IMR-90 (cell line): ENCODE measurements at regions of chr17 and their contacts with region 1.

Region 1: GRCh38 chr17:65231662-65232335 is 94.6 kb downstream of the RGS9 start:
- DNase-seq: peak; percentile 88
- ATAC-seq: peak; percentile 97
- H3K4me3 ChIP-seq: no peak overlapping the region
- H3K27ac ChIP-seq: no peak overlapping the region
- H3K4me1 ChIP-seq: peaks cover 2% of the 10 kb centered on the region; the same call in 1 of the 2 replicates
- H3K27me3 ChIP-seq: peaks cover 2% of the 10 kb centered on the region; the same call in 1 of the 2 replicates
- CTCF ChIP-seq: peak; percentile 89
- POLR2A ChIP-seq: no peak
- RAD21 ChIP-seq: peak; percentile 96

Region 2: DNA sequence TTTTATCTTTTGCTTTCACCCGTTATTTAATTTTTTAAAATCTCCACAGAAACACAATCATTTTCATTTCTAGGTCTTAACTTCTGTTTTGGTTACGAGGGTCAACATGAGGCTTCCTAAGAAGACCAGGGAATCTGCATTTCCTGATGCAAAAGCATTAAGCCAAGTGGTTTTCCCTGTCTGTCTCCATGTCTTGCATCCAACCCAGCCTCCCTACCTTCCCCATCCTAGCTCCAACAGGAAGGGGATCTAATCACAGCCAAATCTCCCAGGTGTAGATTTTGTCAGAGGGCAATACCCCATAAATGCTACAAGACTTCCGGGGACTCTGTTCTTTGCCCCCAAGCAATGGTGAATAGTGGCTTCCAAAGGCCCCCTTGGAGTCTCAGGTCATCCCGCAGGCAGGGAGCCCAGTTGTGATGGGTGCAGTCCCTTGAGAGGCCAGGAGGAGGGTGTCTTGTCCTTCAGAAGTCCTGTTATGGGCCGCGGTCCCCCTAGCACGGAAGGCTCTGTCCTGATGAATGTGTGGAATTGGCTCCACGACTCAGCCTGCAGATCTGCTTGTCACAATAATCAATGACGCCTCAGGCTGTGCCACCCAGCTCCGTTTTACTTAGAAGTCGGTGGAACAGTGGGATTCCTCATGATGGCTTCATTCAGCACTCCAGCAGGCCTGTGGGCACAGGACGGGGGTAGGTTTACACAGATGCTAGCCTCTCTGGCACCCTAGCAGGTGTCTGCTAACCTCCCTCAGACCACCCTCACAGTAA is 46.4 kb after region 1 on chr17:
- CTCF ChIA-PET with region 1: no interaction called
- POLR2A ChIA-PET with region 1: no interaction called
- dilution Hi-C with region 1: no loop called
- in situ Hi-C with region 1: no loop called
- intact Hi-C with region 1: loop called (anchors 1 kb)
- DNase-seq: peak; percentile 62
- ATAC-seq: peak; percentile 97
- H3K4me3 ChIP-seq: no peak overlapping the region
- H3K27ac ChIP-seq: no peak overlapping the region
- H3K4me1 ChIP-seq: peaks cover 3% of the 10 kb centered on the region; the same call in 1 of the 2 replicates
- H3K27me3 ChIP-seq: peaks cover 4% of the 10 kb centered on the region
- CTCF ChIP-seq: peak; percentile 72
- POLR2A ChIP-seq: no peak
- RAD21 ChIP-seq: peak; percentile 84

Region 3: DNA sequence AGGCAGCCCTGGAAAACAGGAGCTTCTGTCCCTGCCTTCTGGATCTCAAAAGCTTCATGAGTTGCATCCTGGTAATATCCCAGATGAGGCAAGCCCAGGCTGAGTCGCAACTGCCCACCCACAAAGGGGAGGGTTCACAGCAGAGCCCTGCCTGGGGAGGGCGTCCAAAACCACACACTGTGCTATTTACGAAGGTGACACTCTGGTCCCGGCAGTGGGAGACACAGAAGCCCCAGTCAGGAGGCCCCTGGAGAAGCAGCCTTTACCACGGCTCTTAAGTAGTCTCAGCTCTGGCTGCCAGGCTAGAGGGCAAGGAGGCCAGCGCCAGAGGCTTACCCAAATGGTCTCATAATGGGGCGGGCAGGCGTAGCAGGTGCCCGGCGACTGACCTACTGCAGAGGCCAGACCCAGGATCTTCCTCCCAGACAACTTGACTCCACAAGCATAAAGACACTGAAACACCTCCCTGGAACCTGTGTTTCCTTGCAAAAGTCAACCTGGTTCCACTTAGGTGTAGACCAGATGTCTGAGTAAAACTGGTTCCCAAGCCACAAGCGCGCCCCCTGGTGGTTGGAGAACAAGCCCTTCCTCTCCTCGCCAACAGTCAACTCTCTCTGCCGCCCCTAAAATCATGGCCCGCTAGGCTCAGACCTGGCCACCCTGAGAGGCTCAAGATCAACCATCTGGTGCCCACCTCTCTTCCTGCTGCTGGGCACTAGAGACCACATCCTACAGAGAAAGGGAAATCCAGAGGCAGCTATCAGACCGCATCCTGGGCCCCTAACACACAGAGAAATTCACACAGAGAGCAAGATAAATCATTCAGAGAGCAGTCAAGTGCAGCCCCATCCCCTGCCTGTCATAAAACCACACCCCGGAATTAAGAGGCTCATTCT is 324.5 kb after region 1 on chr17:
- CTCF ChIA-PET with region 1: no interaction called
- POLR2A ChIA-PET with region 1: no interaction called
- dilution Hi-C with region 1: no loop called
- in situ Hi-C with region 1: no loop called
- intact Hi-C with region 1: loop called (anchors 2 kb)
- DNase-seq: peak; percentile 50
- ATAC-seq: no peak
- H3K4me3 ChIP-seq: no peak overlapping the region
- H3K27ac ChIP-seq: no peak overlapping the region
- H3K4me1 ChIP-seq: peaks cover 17% of the 10 kb centered on the region
- H3K27me3 ChIP-seq: peaks cover 15% of the 10 kb centered on the region
- CTCF ChIP-seq: peak; percentile 62
- POLR2A ChIP-seq: no peak
- RAD21 ChIP-seq: peak; percentile 60

Region 4: DNA sequence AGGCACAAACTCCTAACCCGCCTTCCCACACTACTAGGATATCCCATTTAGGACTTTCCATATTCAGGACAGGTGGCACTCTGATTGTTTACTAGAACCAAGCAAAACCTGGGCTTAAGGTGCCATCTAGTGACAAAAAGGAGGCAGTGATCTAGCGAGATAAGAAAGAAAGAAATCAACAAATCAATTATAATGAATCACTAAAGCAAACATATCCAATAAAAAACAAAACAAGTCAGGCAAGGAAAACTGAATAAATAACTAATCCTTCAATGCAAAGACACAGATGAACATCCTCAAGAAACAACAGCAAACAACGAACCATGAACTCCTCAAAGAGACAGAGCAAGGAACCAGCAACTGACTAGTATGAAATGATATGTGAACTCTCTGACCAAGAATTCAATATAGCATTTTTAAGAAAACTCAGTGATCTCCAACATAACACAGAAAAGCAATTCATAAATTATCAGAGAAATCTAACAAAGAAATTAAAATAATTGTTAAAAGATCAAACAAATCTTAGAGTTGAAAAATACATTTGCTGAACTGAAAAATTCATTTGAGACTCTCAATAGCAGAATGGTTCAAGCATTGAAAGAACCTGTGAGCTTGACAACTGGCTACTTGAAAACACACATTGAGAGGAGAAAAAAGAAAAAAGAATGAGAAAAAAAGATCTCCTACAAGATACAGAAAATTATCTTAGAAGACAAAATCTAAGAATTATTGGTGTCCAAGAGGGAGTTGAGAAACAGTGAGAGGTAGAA is 756.5 kb after region 1 on chr17:
- CTCF ChIA-PET with region 1: no interaction called
- POLR2A ChIA-PET with region 1: no interaction called
- dilution Hi-C with region 1: no loop called
- in situ Hi-C with region 1: no loop called
- intact Hi-C with region 1: loop called (anchors 1 kb)
- DNase-seq: peak; percentile 48
- ATAC-seq: no peak
- H3K4me3 ChIP-seq: no peak overlapping the region
- H3K27ac ChIP-seq: no peak overlapping the region
- H3K4me1 ChIP-seq: no peaks in the 10 kb centered on the region
- H3K27me3 ChIP-seq: no peaks in the 10 kb centered on the region
- CTCF ChIP-seq: peak; percentile 64
- POLR2A ChIP-seq: no peak
- RAD21 ChIP-seq: peak; percentile 85

Region 5: GRCh38 chr17:66165513-66166123 is 933.8 kb after region 1 on chr17:
- CTCF ChIA-PET with region 1: interaction called, 3 read pairs
- POLR2A ChIA-PET with region 1: no interaction called
- dilution Hi-C with region 1: no loop called
- in situ Hi-C with region 1: loop called (anchors 5 kb)
- intact Hi-C with region 1: loop called (anchors 1 kb)
- DNase-seq: peak; percentile 75
- ATAC-seq: peak; percentile 92
- H3K4me3 ChIP-seq: no peak overlapping the region
- H3K27ac ChIP-seq: no peak overlapping the region
- H3K4me1 ChIP-seq: no peaks in the 10 kb centered on the region
- H3K27me3 ChIP-seq: no peaks in the 10 kb centered on the region
- CTCF ChIP-seq: peak; percentile 81
- POLR2A ChIP-seq: 0 out of 2 replicates have a peak, but pooled peaks have one; percentile 38
- RAD21 ChIP-seq: peak; percentile 91

Region 6: DNA sequence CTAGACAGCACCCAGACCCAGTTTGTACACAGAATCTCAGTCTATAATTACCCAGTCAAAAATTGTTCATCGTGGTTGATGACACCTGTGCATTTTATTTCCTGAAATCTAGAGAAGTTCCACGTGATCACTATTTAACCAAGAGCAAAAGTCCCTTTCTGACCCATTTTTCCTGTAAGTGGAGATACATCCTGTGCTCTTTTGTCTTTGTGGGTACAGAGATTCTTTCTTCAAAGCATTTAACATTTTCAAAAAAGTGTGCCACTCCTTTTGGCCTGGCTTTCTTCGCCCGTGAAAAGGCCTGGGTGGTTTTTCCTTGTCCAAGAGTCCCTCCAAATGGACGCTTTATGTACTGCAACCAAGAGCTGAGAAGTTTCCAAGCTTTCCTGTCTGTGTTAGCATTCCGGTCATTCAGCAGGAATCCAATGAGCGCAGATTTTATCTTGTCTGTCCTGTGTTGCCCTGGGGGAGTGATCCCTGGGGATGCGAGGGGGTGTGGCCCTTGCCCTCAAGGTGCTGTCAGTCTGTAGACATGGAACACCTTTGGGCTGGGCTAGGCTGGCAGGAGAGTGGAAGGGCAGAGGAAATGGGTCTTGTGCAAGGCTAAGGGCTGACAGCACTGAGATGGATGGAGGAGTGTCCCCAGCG is 1442.0 kb after region 1 on chr17:
- CTCF ChIA-PET with region 1: no interaction called
- POLR2A ChIA-PET with region 1: no interaction called
- dilution Hi-C with region 1: no loop called
- in situ Hi-C with region 1: loop called (anchors 25 kb)
- intact Hi-C with region 1: no loop called
- DNase-seq: peak; percentile 72
- ATAC-seq: peak; percentile 94
- H3K4me3 ChIP-seq: no peak overlapping the region
- H3K27ac ChIP-seq: no peak overlapping the region
- H3K4me1 ChIP-seq: peaks cover 4% of the 10 kb centered on the region
- H3K27me3 ChIP-seq: no peaks in the 10 kb centered on the region
- CTCF ChIP-seq: peak; percentile 82
- POLR2A ChIP-seq: no peak
- RAD21 ChIP-seq: peak; percentile 92

Region 7: GRCh38 chr17:66906321-66907278 is 1674.8 kb after region 1 on chr17:
- CTCF ChIA-PET with region 1: no interaction called
- POLR2A ChIA-PET with region 1: no interaction called
- dilution Hi-C with region 1: no loop called
- in situ Hi-C with region 1: no loop called
- intact Hi-C with region 1: loop called (anchors 10 kb)
- DNase-seq: peak; percentile 76
- ATAC-seq: peak; percentile 60
- H3K4me3 ChIP-seq: no peak overlapping the region
- H3K27ac ChIP-seq: no peak overlapping the region
- H3K4me1 ChIP-seq: peaks cover 6% of the 10 kb centered on the region
- H3K27me3 ChIP-seq: peaks cover 16% of the 10 kb centered on the region
- CTCF ChIP-seq: peak; percentile 81
- POLR2A ChIP-seq: no peak
- RAD21 ChIP-seq: peak; percentile 83